ENCODE measurements at regions of chr12 and their contacts with region 1.

Region 1: GRCh38 chr12:14845350-14845750 is 2.0 kb upstream of the ART4 start:
- DNase-seq: no peak
- ATAC-seq: peak; percentile 82
- H3K4me3 ChIP-seq: no peak overlapping the region
- H3K27ac ChIP-seq: no peak overlapping the region
- H3K4me1 ChIP-seq: peaks cover 3 to 7% of the 10 kb centered on the region in 2 donors
- H3K27me3 ChIP-seq: no peaks in the 10 kb centered on the region

Region 2: DNA sequence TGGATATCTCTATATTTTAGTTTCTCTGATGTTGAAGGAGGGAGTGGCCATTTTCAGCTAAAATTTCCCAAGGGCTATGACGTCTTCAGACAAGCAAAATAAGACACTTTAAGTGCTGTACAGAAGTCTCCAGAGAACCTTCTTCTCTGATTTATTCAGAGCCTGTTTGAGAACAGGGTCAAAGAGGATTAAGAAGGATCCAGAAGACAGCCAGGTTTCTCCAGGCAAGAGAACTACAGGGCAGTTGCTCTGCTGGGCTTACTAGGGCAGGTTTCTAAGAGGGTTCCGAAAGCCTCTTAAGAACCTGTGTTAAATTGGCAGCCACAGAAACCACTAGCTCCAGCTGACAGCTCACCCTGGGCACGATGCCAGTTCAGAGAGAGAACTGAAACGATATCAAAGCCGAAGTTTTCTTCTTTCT is 39.1 kb after region 1 on chr12:
- intact Hi-C with region 1: loop called (anchors 5 kb)
- DNase-seq: peak; percentile 91
- ATAC-seq: peak; percentile 72
- H3K4me3 ChIP-seq: peak overlapping the region; percentile 84 to 98
- H3K27ac ChIP-seq: peak overlapping the region; percentile 64 to 68
- H3K4me1 ChIP-seq: peaks cover 0 to 2% of the 10 kb centered on the region in 2 donors
- H3K27me3 ChIP-seq: no peaks in the 10 kb centered on the region

Region 3: DNA sequence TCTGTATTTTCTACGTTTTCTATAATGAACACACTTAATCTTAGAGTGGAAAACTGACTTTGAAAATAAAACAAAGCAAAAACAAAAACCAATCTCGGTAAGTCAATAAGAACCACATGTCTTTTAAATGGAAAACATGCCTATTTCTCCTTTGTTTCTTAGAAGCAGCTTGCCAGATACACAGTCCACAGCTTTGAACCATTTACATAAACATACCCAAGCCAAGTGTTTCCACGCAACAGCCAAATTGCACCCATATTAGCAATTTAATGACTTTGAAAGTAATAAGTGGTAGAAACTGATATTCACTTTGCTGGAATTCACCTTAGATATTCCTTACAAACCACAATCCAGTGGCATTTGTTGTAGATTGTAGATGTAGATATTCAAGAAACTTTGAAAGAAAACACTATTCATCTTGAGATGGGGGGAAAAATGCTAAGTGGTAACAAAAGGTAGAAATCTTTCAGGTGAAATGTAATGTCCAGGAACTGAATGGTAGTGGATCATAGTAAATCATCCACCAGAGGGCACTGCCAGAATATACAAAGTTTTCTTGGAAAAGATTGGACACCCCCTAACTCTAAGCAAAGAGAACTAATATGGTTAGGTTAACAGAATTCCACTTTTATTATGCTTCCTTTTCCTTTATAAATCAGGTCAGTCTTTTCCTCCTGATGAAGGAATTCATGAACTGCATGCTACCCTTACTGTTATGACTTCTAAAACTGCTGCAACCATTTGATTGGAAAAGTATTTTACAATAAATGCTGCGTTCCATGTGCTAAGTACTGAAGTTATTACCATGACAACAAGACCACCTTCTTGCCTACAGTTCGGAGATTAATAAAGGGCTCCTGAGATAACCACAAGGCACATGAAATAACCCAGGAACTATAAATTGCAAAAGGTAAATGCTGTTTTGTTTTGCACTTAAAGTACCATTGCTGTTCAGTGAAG is 306.1 kb after region 1 on chr12:
- intact Hi-C with region 1: loop called (anchors 5 to 10 kb)
- DNase-seq: no peak
- ATAC-seq: peak; percentile 83
- H3K4me3 ChIP-seq: no peak overlapping the region
- H3K27ac ChIP-seq: peak overlapping the region in 1 of 2 donors; percentile 96
- H3K4me1 ChIP-seq: peaks cover 7 to 9% of the 10 kb centered on the region in 2 donors
- H3K27me3 ChIP-seq: no peaks in the 10 kb centered on the region

Region 4: GRCh38 chr12:15268927-15269552 is 423.7 kb after region 1 on chr12:
- intact Hi-C with region 1: loop called (anchors 5 kb)
- DNase-seq: no peak
- ATAC-seq: peak; percentile 82
- H3K4me3 ChIP-seq: no peak overlapping the region
- H3K27ac ChIP-seq: no peak overlapping the region
- H3K4me1 ChIP-seq: peaks cover 0 to 3% of the 10 kb centered on the region in 2 donors
- H3K27me3 ChIP-seq: no peaks in the 10 kb centered on the region

Region 5: DNA sequence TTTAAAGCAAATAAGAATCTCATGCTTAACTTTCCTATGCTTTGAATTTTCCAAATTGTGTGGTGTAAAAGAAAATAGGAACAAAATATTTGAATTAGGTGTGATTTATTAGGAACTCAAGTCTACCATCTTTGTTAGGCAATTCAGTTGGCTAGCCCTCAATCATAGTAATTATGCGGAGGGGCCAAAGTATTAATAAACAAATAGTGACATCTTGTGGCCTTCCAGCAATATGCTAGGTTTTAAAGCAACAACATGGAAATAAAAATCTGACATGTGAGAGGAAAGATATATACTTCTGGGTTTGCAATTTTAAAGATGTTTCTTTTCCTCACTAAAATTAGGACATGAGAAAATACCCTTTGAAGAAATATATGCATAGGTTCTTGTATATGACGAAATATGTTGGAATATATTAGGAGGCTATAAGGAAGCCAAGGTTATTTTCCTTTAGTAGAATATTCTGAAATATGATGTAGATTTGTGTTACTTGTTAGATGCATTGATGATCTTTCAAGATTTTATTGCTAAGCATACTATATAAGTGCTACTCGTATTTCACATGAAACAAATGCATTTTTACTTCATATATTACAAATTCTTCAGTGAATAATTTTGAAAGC is 677.3 kb after region 1 on chr12:
- intact Hi-C with region 1: loop called in 1 of 2 experiments (anchors 10 kb)
- DNase-seq: no peak
- ATAC-seq: peak; percentile 74
- H3K4me3 ChIP-seq: no peak overlapping the region
- H3K27ac ChIP-seq: no peak overlapping the region
- H3K4me1 ChIP-seq: no peaks in the 10 kb centered on the region
- H3K27me3 ChIP-seq: no peaks in the 10 kb centered on the region